ENCODE measurements at regions of chr11 and their contacts with region 1.

Region 1: DNA sequence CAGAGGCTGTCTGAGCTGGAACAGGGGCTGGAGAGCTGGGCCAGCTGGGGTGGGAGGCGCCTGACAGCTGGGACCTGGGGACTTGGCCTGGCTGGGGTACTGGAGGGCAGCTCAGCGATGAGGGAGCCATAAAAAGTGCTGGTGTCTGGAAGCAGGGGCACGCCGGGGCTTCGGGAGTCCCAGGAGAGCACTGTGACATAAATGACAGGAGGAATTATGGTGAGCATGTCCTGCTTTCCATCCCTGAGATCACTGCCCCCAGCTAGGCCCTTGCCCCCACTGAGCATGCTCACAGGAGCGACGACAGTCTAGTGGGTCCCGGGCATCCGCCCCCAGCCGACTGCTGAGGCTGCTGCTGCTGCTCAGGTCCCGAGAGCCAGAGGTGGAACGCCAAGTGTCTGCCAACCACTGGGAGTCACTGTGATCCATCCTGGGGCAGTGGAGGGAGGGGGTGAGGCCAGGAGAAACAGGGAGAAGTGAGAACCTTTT is 6.2 kb downstream of the ROBO4 start:
- DNase-seq: no peak
- ATAC-seq: no peak
- H3K4me3 Mint-ChIP-seq: no peak overlapping the region
- H3K27ac Mint-ChIP-seq: no peak overlapping the region
- H3K4me1 Mint-ChIP-seq: no peaks in the 10 kb centered on the region
- H3K27me3 Mint-ChIP-seq: no peaks in the 10 kb centered on the region
- CTCF ChIP-seq: no peak

Region 2: GRCh38 chr11:124865921-124866583 is 25.4 kb before region 1 on chr11:
- CTCF ChIA-PET with region 1: interaction called, 10 read pairs
- POLR2A ChIA-PET with region 1: no interaction called
- intact Hi-C with region 1: no loop called
- DNase-seq: peak; percentile 64
- ATAC-seq: peak; percentile 65
- H3K4me3 Mint-ChIP-seq: no peak overlapping the region
- H3K27ac Mint-ChIP-seq: no peak overlapping the region
- H3K4me1 Mint-ChIP-seq: peaks cover 36% of the 10 kb centered on the region
- H3K27me3 Mint-ChIP-seq: peaks cover 88% of the 10 kb centered on the region
- CTCF ChIP-seq: peak; percentile 75

Region 3: DNA sequence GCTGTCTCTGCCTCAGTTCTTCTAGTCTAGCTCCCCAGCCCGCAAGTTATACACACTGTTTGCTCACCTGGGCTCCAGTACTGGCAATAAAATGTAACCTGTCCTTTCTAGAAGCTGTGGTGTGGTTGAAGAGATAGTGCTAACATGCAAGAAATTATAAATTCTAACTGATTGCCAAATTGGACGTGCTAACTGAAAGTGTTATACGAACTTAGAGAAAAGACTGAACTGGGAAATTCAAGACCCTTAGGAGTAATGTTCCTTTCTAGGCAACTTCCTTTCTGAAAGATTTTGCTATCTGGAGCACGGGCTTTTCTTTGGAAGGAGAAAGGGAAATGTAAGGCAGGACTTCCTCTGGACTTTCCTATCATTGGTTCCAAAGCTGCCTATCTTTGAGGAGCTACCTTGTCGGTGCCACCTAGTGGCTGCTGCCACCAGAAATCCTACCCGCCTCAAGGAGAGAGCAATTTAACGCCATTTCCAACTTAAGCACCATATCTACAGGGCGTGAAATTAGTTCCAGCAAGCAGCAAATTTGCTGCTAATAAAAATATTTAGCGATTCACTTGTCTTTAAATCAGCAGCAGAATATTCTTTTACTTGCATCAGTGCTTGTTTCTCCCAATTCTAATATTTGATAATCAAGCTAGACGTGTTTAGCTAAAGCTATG is 232.7 kb after region 1 on chr11:
- CTCF ChIA-PET with region 1: no interaction called
- POLR2A ChIA-PET with region 1: no interaction called
- intact Hi-C with region 1: no loop called
- DNase-seq: peak; percentile 68
- ATAC-seq: peak; percentile 73
- H3K4me3 Mint-ChIP-seq: no peak overlapping the region
- H3K27ac Mint-ChIP-seq: no peak overlapping the region
- H3K4me1 Mint-ChIP-seq: peaks cover 3% of the 10 kb centered on the region
- H3K27me3 Mint-ChIP-seq: peaks cover 20% of the 10 kb centered on the region
- CTCF ChIP-seq: peak; percentile 54

Measured in activated CD8-positive, alpha-beta T cell treated with anti-CD3 and anti-CD28 coated beads for 36 hours (primary cell).